ENCODE measurements at regions of chr2 and their contacts with region 1.

Region 1: DNA sequence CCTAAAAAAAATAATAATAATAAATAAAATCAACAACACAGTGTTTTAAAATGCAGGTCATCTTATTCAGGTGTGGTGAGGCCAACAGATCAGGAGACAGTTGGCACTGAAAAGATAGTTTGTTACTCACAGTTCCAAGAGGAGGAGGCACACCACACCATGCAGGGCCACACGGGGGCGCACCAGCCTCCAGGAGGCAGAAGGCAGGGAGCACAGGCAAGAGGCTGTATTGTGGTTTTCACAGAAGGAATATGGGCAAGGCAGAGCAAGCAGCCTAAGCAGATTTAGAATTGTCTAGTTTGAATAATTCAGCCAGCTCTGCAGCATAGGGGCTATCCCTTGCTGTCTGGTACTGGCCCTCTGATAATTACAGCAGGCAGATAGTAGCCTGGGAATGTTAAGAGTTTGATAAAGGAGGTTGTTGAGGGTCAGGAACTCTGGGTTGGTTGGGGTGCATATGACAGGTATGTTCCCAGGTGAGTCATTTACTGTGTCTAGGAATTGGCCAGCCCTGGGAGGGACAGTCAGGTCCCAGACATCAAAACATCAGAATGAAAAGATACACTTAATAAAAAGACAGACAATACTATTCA is 31.3 kb downstream of the KIAA2012 start:
- DNase-seq: no peak
- H3K4me3 ChIP-seq: no peak overlapping the region
- H3K27ac ChIP-seq: no peak overlapping the region
- H3K27me3 ChIP-seq: no peaks in the 10 kb centered on the region
- CTCF ChIP-seq: peak; percentile 81

Region 2: GRCh38 chr2:201847481-201847880 is 256.9 kb before region 1 on chr2:
- CTCF ChIA-PET with region 1: interaction called, 4 read pairs
- POLR2A ChIA-PET with region 1: interaction called, 15 read pairs
- DNase-seq: no peak
- H3K4me3 ChIP-seq: no peak overlapping the region
- H3K27ac ChIP-seq: no peak overlapping the region
- H3K27me3 ChIP-seq: no peaks in the 10 kb centered on the region
- CTCF ChIP-seq: no peak

Region 3: GRCh38 chr2:202091476-202091875 is 12.9 kb before region 1 on chr2:
- CTCF ChIA-PET with region 1: interaction called, 23 read pairs
- POLR2A ChIA-PET with region 1: no interaction called
- DNase-seq: peak; percentile 43
- H3K4me3 ChIP-seq: no peak overlapping the region
- H3K27ac ChIP-seq: no peak overlapping the region
- H3K27me3 ChIP-seq: no peaks in the 10 kb centered on the region
- CTCF ChIP-seq: no peak

Region 4: GRCh38 chr2:202115479-202115971 is 11.2 kb after region 1 on chr2:
- CTCF ChIA-PET with region 1: interaction called, 12 read pairs
- POLR2A ChIA-PET with region 1: no interaction called
- DNase-seq: peak; percentile 65
- H3K4me3 ChIP-seq: no peak overlapping the region
- H3K27ac ChIP-seq: peak overlapping the region; percentile 42
- H3K27me3 ChIP-seq: no peaks in the 10 kb centered on the region
- CTCF ChIP-seq: no peak

Region 5: GRCh38 chr2:202178342-202178958 is 74.1 kb after region 1 on chr2:
- CTCF ChIA-PET with region 1: interaction called, 17 read pairs
- POLR2A ChIA-PET with region 1: no interaction called
- DNase-seq: peak; percentile 43
- H3K4me3 ChIP-seq: no peak overlapping the region
- H3K27ac ChIP-seq: no peak overlapping the region
- H3K27me3 ChIP-seq: no peaks in the 10 kb centered on the region
- CTCF ChIP-seq: peak; percentile 83

Measured in AG04450 (cell line).